ENCODE measurements at regions of chrX and their contacts with region 1.

Region 1: GRCh38 chrX:14936561-14936960 is 63.3 kb downstream of the MOSPD2 start:
- DNase-seq: peak; percentile 5 to 39
- H3K4me3 ChIP-seq: no peak overlapping the region
- H3K27ac ChIP-seq: 0 out of 2 replicates have a peak overlapping the region, but pooled peaks have one; percentile 18
- H3K4me1 ChIP-seq: 0 out of 2 replicates have a peak, but pooled peaks cover 7% of the 10 kb centered on the region
- H3K27me3 ChIP-seq: no peaks in the 10 kb centered on the region
- CTCF ChIP-seq: no peak

Region 2: DNA sequence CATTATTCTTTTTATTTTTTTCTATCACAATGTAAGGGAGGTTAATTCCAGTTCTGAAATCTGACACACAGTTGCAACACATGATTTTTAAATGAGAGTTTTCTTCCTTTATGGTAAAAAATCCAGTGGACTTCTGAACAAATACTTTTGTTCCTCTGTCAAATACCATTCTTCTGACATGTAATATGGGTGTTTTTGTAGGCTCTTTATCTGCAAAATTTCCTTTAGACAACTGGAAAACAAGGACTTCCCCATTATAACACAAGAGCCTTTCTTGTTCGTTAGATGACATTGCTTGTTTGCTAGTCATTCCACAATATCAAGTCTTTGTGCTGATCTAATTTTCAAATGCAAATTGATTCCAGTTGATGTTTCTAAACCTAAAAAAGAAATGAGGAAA is 71.4 kb before region 1 on chrX:
- CTCF ChIA-PET with region 1: no interaction called
- POLR2A ChIA-PET with region 1: no interaction called
- intact Hi-C with region 1: no loop called
- DNase-seq: no peak
- H3K4me3 ChIP-seq: no peak overlapping the region
- H3K27ac ChIP-seq: no peak overlapping the region
- H3K4me1 ChIP-seq: no peaks in the 10 kb centered on the region
- H3K27me3 ChIP-seq: no peaks in the 10 kb centered on the region
- CTCF ChIP-seq: no peak

Region 3: DNA sequence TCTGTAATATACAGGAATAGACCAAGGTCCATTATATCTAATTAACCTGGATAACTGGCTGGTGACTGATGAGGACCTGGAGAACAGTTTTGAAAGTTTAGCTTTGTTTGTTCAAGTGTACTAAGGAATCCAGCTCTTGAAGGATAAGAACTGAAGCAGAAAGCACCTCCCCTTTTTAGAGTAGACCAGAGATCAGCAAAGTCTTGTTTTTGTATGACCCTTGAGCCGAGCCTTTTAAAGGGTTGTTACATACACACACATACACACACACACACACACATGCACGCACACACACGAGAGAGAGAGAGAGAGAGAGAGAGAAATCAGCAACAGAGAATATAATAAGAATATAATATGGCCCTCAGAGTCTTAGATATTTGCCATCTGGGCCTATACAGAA is 50.3 kb before region 1 on chrX:
- CTCF ChIA-PET with region 1: no interaction called
- POLR2A ChIA-PET with region 1: interaction called, 14 read pairs
- intact Hi-C with region 1: no loop called
- DNase-seq: no peak
- H3K4me3 ChIP-seq: no peak overlapping the region
- H3K27ac ChIP-seq: no peak overlapping the region
- H3K4me1 ChIP-seq: no peaks in the 10 kb centered on the region
- H3K27me3 ChIP-seq: no peaks in the 10 kb centered on the region
- CTCF ChIP-seq: no peak

Region 4: DNA sequence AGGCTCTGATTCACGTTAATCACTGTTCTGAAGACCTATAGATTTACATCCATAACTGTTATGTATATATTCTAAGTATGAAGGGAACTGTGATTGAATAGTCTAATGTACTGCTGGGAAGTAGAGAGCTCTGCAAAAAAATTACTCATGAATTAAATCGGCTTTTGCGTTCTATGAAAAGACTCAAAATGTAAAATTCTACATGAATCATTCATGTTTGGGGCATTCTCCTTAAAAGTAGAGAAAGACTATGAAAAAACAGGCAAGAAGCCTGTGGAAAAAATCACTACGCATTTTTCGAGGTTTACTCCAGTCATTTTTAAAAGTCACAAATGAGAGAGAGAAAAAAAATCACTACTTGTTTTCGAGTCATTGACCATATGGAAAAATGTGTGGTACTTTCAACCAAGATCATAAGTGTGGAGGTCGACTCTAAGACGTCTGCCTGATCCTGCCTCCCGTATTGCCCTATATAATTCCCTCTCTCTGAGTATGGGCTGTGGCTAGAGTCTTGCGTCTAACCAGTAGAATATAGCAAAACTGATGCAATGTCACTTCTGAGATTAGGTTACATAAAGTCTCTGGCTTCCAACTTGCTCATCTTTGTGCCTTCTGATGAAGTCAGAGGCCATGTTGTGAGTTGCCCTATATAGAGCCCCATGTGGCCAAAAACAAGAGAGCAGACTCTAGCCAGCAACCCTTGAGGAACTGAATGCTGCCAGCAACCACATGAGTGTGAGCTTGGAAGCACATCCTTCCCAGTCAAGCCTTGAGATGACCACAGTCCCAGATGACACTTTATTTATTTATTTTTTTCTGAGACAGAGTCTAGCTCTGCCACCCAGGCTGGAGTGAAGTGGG is 479.8 kb after region 1 on chrX:
- CTCF ChIA-PET with region 1: no interaction called
- POLR2A ChIA-PET with region 1: interaction called, 13 read pairs
- intact Hi-C with region 1: no loop called
- DNase-seq: no peak
- H3K4me3 ChIP-seq: no peak overlapping the region
- H3K27ac ChIP-seq: no peak overlapping the region
- H3K4me1 ChIP-seq: no peaks in the 10 kb centered on the region
- H3K27me3 ChIP-seq: no peaks in the 10 kb centered on the region
- CTCF ChIP-seq: no peak

Measured in PC-9 (cell line).